Activated T-helper 2 cell treated with anti-CD3 and anti-CD28 coated beads, Interferon-gamma antibody, Interleukin-2, Interleukin-4, amounts not matched to agents 10 μg/mL and 5 μg/mL and 100 μg/mL, durations not matched to agents 14 hours and 24 hours and 36 hours (primary cell): ENCODE measurements at regions of chr6 and their contacts with region 1.

Region 1: GRCh38 chr6:45486736-45487135 is 109.0 kb upstream of the SUPT3H start:
- DNase-seq: no peak
- H3K4me3 Mint-ChIP-seq: peak overlapping the region; percentile 20
- H3K27ac Mint-ChIP-seq: peak overlapping the region; percentile 74
- H3K4me1 Mint-ChIP-seq: peaks cover 78% of the 10 kb centered on the region
- H3K27me3 Mint-ChIP-seq: no peaks in the 10 kb centered on the region

Region 2: DNA sequence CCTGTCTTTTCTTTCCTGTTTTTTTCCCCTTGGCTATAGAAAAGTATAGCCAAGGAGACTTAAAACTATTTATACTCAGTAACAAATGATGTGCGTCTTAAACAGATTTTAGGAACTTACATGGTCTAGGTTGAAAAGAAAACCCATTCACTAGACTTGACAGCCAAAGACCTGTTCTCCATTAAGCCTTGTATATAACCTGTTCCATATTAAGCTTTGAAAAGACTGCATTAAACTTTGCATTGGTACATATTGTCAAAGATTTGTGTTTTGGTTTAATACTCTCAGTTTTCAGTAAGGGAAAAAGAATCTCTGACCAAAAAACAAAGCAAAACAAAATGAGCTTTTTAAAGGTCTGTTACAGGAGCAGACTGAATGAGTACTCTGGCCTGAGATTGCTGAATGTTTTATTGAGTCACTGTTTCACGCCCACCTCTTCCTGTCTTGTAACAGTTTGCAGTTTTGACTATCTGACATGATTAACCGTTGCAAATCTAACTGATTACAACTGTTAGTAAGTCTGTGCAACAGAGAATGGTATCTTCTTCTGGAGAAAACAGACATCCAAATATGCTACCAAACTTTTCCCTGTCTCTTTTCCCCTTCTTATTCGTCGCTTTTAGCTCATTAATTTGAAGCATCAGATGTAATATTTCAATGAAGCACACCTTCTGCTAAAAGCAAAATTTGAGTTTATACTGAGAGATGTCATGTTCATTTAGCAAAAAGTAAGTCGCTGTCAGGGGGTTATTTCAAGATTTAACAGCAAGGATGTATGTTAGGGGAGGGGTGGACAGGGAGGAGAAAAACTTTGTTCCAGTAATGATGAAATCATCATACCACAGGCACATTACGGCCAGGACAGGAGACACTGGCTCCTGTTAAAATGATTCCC is 49.9 kb before region 1 on chr6:
- intact Hi-C with region 1: loop called (anchors 2 kb)
- DNase-seq: no peak
- H3K4me3 Mint-ChIP-seq: peak overlapping the region; percentile 82
- H3K27ac Mint-ChIP-seq: peak overlapping the region; percentile 98
- H3K4me1 Mint-ChIP-seq: peaks cover 84% of the 10 kb centered on the region
- H3K27me3 Mint-ChIP-seq: no peaks in the 10 kb centered on the region

Region 3: DNA sequence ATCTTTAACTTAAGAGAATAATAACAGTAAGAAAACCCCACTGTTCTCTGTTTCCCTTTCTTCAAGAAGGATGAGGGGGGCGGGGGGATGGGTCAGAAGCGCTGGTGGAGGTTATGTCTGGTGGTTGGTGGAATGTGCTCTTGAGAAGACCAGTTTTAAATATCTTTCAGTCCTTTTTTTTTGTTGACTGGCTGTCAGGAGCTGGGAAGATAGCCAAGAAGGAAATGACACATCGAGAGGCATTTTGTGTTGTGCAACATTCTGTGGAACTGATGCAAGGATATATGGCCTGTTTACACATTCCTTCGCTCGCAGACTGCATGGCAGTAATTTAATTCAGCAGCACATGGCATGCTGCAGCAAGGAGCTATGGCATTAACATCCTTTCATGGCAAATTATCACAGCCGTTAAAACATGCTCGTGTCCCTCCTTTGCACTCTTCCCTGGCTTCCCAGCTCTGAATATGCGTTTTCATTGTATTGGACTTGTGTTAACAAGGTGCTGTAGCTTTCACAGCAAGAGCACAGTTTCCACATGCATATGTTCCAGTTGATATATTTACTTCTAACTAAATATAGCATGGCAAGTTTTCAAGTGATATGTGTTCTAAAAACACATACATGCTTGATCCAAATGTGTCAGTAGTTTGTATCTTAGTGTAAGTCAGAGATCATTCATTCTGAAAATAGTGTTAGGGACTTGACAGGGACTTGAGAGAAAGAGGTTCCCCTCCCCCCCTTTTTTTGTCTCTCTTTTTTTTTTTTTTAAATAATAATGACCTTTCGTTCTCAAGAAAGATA is 40.8 kb before region 1 on chr6:
- intact Hi-C with region 1: loop called (anchors 2 kb)
- DNase-seq: no peak
- H3K4me3 Mint-ChIP-seq: peak overlapping the region; percentile 58
- H3K27ac Mint-ChIP-seq: peak overlapping the region; percentile 85
- H3K4me1 Mint-ChIP-seq: peaks cover 94% of the 10 kb centered on the region
- H3K27me3 Mint-ChIP-seq: no peaks in the 10 kb centered on the region

Region 4: DNA sequence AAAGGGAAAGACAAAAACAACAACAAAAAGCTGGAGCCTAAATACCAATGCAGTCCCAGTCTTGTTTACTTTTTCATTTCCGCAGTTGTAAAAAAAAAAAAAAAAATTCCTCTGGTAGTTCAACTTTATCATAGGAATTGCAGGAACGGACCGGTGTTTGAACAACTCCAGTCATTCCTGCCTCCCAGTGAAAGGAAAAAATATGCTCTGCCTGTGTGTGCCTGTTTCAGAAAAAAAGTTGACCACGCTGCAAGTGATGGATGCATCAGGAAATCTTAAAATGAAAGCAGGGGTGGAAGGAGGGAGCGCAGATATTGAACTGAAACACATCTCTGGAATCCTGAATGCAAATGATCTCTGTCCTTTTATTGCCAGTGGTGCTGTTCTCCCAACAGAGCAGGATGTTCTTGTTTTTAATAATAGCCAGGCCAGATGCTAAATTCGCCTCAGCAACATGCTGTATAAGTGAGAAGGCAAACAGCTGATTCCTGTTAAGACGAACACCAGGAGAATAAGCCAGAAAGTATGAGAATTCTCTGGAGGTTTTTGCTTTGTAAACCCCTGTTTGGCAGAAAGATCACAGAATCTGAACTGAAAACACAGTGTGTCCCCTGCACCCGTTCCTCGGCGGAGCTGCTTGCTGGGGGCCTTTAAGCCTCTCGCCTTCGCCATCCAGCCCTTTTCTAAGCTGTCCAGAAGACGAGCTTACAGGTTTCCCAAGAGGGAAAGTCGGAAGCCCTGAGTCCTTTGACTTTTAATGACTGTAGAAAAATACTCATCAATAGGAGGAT is 69.4 kb after region 1 on chr6:
- intact Hi-C with region 1: loop called (anchors 5 kb)
- DNase-seq: no peak
- H3K4me3 Mint-ChIP-seq: no peak overlapping the region
- H3K27ac Mint-ChIP-seq: no peak overlapping the region
- H3K4me1 Mint-ChIP-seq: peaks cover 69% of the 10 kb centered on the region
- H3K27me3 Mint-ChIP-seq: no peaks in the 10 kb centered on the region